B cell (primary cell): ENCODE measurements at regions of chr1 and their contacts with region 1.

Region 1: GRCh38 chr1:185603158-185603557 is 131.0 kb upstream of the HMCN1 start:
- DNase-seq: peak; percentile 86
- ATAC-seq: peak; percentile 93
- H3K4me3 ChIP-seq: peak overlapping the region in 1 of 5 experiments; percentile 42
- H3K4me3 Mint-ChIP-seq: no peak overlapping the region
- H3K27ac ChIP-seq: peak overlapping the region; percentile 27 to 56
- H3K27ac Mint-ChIP-seq: no peak overlapping the region
- H3K4me1 ChIP-seq: peaks cover 54 to 68% of the 10 kb centered on the region in 2 donors
- H3K4me1 Mint-ChIP-seq: peaks cover 31% of the 10 kb centered on the region
- H3K27me3 ChIP-seq: no peaks in the 10 kb centered on the region
- H3K27me3 Mint-ChIP-seq: no peaks in the 10 kb centered on the region
- CTCF ChIP-seq: no peak

Region 2: GRCh38 chr1:185328255-185328654 is 274.9 kb before region 1 on chr1:
- CTCF ChIA-PET with region 1: no interaction called
- POLR2A ChIA-PET with region 1: no interaction called
- intact Hi-C with region 1: no loop called
- DNase-seq: no peak
- ATAC-seq: no peak
- H3K4me3 ChIP-seq: no peak overlapping the region
- H3K4me3 Mint-ChIP-seq: no peak overlapping the region
- H3K27ac ChIP-seq: no peak overlapping the region
- H3K27ac Mint-ChIP-seq: no peak overlapping the region
- H3K4me1 ChIP-seq: no peaks in the 10 kb centered on the region
- H3K4me1 Mint-ChIP-seq: no peaks in the 10 kb centered on the region
- H3K27me3 ChIP-seq: no peaks in the 10 kb centered on the region
- H3K27me3 Mint-ChIP-seq: no peaks in the 10 kb centered on the region
- CTCF ChIP-seq: no peak

Region 3: GRCh38 chr1:185338719-185339622 is 264.2 kb before region 1 on chr1:
- CTCF ChIA-PET with region 1: no interaction called
- POLR2A ChIA-PET with region 1: no interaction called
- intact Hi-C with region 1: loop called (anchors 5 kb)
- DNase-seq: peak; percentile 72
- ATAC-seq: peak; percentile 88
- H3K4me3 ChIP-seq: peak overlapping the region in 2 of 5 experiments; percentile 30 to 37
- H3K4me3 Mint-ChIP-seq: peak overlapping the region; percentile 76
- H3K27ac ChIP-seq: peak overlapping the region; percentile 50 to 52
- H3K27ac Mint-ChIP-seq: peak overlapping the region; percentile 83
- H3K4me1 ChIP-seq: peaks cover 23 to 24% of the 10 kb centered on the region in 2 donors
- H3K4me1 Mint-ChIP-seq: peaks cover 26% of the 10 kb centered on the region
- H3K27me3 ChIP-seq: no peaks in the 10 kb centered on the region
- H3K27me3 Mint-ChIP-seq: no peaks in the 10 kb centered on the region
- CTCF ChIP-seq: no peak